Activated CD4-positive, alpha-beta memory T cell treated with anti-CD3 and anti-CD28 coated beads for 36 hours (primary cell): ENCODE measurements at regions of chr21 and their contacts with region 1.

Region 1: GRCh38 chr21:14901482-14901958 is 163.3 kb downstream of the NRIP1 start:
- DNase-seq: peak; percentile 32
- H3K4me3 Mint-ChIP-seq: no peak overlapping the region
- H3K27ac Mint-ChIP-seq: no peak overlapping the region
- H3K4me1 Mint-ChIP-seq: peaks cover 13% of the 10 kb centered on the region
- H3K27me3 Mint-ChIP-seq: no peaks in the 10 kb centered on the region

Region 2: DNA sequence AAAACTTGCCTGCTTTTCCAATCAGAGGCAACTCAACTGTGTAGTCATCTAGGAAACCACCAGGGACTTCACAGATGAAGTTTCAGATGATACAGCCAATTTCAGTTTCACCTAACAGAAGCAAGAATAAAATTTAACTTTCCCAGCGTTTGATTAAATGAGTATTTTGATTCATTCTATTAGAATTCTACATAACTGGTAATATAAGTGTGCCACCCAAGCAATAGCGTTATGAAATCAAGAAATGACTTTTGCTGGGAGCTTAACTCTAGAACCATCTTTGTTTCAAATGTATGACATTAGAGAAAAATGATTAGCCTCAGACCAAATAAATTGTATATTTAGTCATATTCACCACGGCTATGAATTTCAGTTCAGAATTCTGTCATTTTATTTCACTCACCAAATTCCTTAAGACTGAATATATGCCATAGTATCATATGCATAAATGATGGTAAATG is 76.0 kb before region 1 on chr21:
- CTCF ChIA-PET with region 1: no interaction called
- POLR2A ChIA-PET with region 1: no interaction called
- intact Hi-C with region 1: loop called (anchors 2 kb)
- DNase-seq: no peak
- H3K4me3 Mint-ChIP-seq: no peak overlapping the region
- H3K27ac Mint-ChIP-seq: no peak overlapping the region
- H3K4me1 Mint-ChIP-seq: peaks cover 10% of the 10 kb centered on the region
- H3K27me3 Mint-ChIP-seq: peaks cover 3% of the 10 kb centered on the region

Region 3: GRCh38 chr21:14877570-14878228 is 23.8 kb before region 1 on chr21:
- CTCF ChIA-PET with region 1: no interaction called
- POLR2A ChIA-PET with region 1: no interaction called
- intact Hi-C with region 1: no loop called
- DNase-seq: no peak
- H3K4me3 Mint-ChIP-seq: no peak overlapping the region
- H3K27ac Mint-ChIP-seq: no peak overlapping the region
- H3K4me1 Mint-ChIP-seq: peaks cover 8% of the 10 kb centered on the region
- H3K27me3 Mint-ChIP-seq: no peaks in the 10 kb centered on the region

Region 4: DNA sequence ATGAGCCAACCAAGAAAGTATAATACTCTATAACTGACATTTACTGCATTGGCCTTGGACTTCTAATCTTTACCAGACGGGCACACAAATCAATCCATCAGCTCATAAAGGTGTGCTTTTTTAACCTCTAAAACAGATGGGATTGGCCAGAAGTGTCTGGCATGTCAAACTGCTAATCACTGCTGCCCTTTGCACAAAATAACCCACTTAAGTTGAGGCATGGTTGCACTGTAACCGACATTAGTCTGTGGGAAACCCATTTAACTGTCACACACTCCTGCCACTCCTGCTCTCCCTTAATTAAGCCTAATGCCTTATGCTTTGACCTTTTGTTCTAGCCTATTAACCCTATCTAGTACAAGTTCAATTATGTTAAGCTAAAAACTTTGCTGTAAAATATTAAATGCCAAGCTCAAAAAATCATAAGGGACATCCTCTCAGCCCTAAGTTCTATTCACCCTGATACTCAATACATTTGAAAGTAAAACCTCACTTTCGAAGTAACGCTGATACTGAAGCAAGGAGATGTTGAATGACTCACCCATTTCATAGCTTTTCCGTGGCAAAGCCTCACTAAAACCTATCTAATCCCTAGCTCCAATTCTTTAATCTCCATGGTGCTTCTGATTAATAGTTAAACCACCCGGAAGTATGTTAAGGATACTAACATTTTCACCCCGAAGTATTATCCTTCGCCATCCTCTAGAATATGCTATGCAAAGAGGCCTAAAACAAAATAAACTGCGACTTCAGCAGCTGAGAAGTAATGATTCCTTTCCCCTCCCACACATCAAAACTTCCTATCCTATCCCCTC is 150.3 kb after region 1 on chr21:
- CTCF ChIA-PET with region 1: no interaction called
- POLR2A ChIA-PET with region 1: no interaction called
- intact Hi-C with region 1: loop called (anchors 5 kb)
- DNase-seq: no peak
- H3K4me3 Mint-ChIP-seq: peak overlapping the region; percentile 53
- H3K27ac Mint-ChIP-seq: peak overlapping the region; percentile 40
- H3K4me1 Mint-ChIP-seq: peaks cover 49% of the 10 kb centered on the region
- H3K27me3 Mint-ChIP-seq: no peaks in the 10 kb centered on the region